Gastrocnemius medialis (tissue), 4 donors: ENCODE measurements at regions of chr5 and their contacts with region 1.

Region 1: GRCh38 chr5:80083101-80083890 is 48.1 kb downstream of the THBS4 start:
- DNase-seq: peak in 1 of 2 donors; percentile 16
- ATAC-seq: peak; percentile 82 to 84
- H3K4me3 ChIP-seq: peak overlapping the region; percentile 38 to 46 (median 44)
- H3K27ac ChIP-seq: peak overlapping the region; percentile 50 to 67 (median 64)
- H3K4me1 ChIP-seq: peaks cover 6 to 12% of the 10 kb centered on the region in 2 donors
- H3K27me3 ChIP-seq: no peaks in the 10 kb centered on the region
- CTCF ChIP-seq: peak; percentile 54 to 78 (median 64)
- POLR2A ChIP-seq: no peak

Region 2: DNA sequence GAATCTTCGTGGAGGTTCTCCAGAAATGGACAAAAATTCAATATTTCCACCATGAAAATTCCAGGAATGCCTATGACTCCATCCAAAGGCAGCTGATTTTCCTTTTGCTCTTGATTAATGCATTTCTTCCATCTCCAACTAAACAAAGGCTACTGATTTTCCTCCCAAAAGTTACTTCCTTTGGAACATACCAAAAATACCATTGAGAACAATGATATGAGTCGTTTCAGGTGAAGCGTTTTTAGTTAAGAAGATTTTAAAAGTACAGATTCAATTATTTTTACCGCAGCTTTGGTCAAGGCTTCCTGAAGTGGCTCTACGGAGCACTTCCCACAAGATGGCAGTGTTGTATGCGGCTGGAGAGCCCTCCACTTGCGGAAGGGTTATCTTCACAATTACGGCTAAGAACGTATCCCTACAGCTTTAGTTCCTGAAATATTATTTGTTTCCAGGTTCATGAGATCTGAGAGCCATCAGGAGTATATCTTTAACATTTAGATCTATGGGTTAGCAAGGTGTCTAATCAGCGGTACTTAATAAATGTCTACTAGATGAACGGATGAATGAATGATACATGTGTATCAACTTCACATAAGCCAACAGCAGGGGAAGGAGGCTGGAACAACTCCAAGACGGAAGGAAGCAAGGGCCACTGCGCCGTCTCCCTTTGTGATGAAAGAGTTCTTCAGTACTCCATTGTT is 1062.3 kb before region 1 on chr5:
- in situ Hi-C with region 1: no loop called
- intact Hi-C with region 1: loop called (anchors 2 kb)
- DNase-seq: peak; percentile 30 to 33
- ATAC-seq: peak; percentile 72 to 85
- H3K4me3 ChIP-seq: peak overlapping the region in 2 of 4 donors; percentile 6 to 7
- H3K27ac ChIP-seq: no peak overlapping the region
- H3K4me1 ChIP-seq: peaks cover 0 to 3% of the 10 kb centered on the region in 2 donors
- H3K27me3 ChIP-seq: no peaks in the 10 kb centered on the region
- CTCF ChIP-seq: peak in 4 of 5 experiments; percentile 57 to 79 (median 65)
- POLR2A ChIP-seq: no peak

Region 3: GRCh38 chr5:79857714-79858409 is 225.4 kb before region 1 on chr5:
- in situ Hi-C with region 1: no loop called
- intact Hi-C with region 1: loop called (anchors 5 kb)
- DNase-seq: peak in 1 of 2 donors; percentile 66
- ATAC-seq: peak; percentile 14 to 72
- H3K4me3 ChIP-seq: no peak overlapping the region
- H3K27ac ChIP-seq: no peak overlapping the region
- H3K4me1 ChIP-seq: peaks cover 10 to 17% of the 10 kb centered on the region in 2 donors
- H3K27me3 ChIP-seq: no peaks in the 10 kb centered on the region
- CTCF ChIP-seq: peak; percentile 75 to 96 (median 92)
- POLR2A ChIP-seq: no peak

Region 4: GRCh38 chr5:80654391-80655230 is 571.3 kb after region 1 on chr5 and contains the starts of genes DHFR and MSH3:
- in situ Hi-C with region 1: loop called in 1 of 4 experiments (anchors 25 kb)
- intact Hi-C with region 1: no loop called
- DNase-seq: peak; percentile 63 to 73
- ATAC-seq: peak; percentile 55 to 66
- H3K4me3 ChIP-seq: peak within 1 kb of the TSS; percentile 62 to 95 (median 84)
- H3K27ac ChIP-seq: peak within 1 kb of the TSS; percentile 79 to 97 (median 92)
- H3K4me1 ChIP-seq: peaks cover 16 to 19% of the 10 kb centered on the region in 2 donors
- H3K27me3 ChIP-seq: no peaks in the 10 kb centered on the region
- CTCF ChIP-seq: peak in 3 of 5 experiments; percentile 23 to 42 (median 35)
- POLR2A ChIP-seq: peak; percentile 35 to 67
- total RNA-seq, gene DHFR: 2.2 to 5.3 (median 3.7) TPM
- total RNA-seq, gene MSH3: 5.8 to 10.4 (median 7.2) TPM